Right lobe of liver (tissue), 6 donors: ENCODE measurements at regions of chr1 and their contacts with region 1.

Region 1: GRCh38 chr1:110460253-110461220 is 9.6 kb downstream of the PROK1 start:
- DNase-seq: peak in 2 of 3 donors; percentile 43 to 71
- ATAC-seq: peak; percentile 93 to 99 (median 98)
- H3K4me3 ChIP-seq: no peak overlapping the region
- H3K27ac ChIP-seq: no peak overlapping the region
- H3K4me1 ChIP-seq: no peaks in the 10 kb centered on the region
- H3K27me3 ChIP-seq: no peaks in the 10 kb centered on the region
- CTCF ChIP-seq: peak; percentile 96 to 99 (median 98)
- POLR2A ChIP-seq: no peak

Region 2: GRCh38 chr1:110203021-110203661 is 257.4 kb before region 1 on chr1:
- intact Hi-C with region 1: loop called (anchors 5 to 10 kb)
- DNase-seq: no peak
- ATAC-seq: peak; percentile 46 to 76 (median 74)
- H3K4me3 ChIP-seq: no peak overlapping the region
- H3K27ac ChIP-seq: no peak overlapping the region
- H3K4me1 ChIP-seq: no peaks in the 10 kb centered on the region
- H3K27me3 ChIP-seq: no peaks in the 10 kb centered on the region
- CTCF ChIP-seq: peak; percentile 78 to 85 (median 83)
- POLR2A ChIP-seq: no peak

Region 3: GRCh38 chr1:110209715-110210603 is 250.6 kb before region 1 on chr1 and contains the start of gene KCNC4:
- intact Hi-C with region 1: loop called in 1 of 2 experiments (anchors 10 kb)
- DNase-seq: peak; percentile 77 to 88 (median 87)
- ATAC-seq: peak; percentile 76 to 81 (median 79)
- H3K4me3 ChIP-seq: peak within 1 kb of the TSS; percentile 49 to 69 (median 58)
- H3K27ac ChIP-seq: peak within 1 kb of the TSS; percentile 47 to 63 (median 49)
- H3K4me1 ChIP-seq: peaks cover 0 to 21% (median 0%) of the 10 kb centered on the region in 4 donors
- H3K27me3 ChIP-seq: peaks cover 0 to 5% of the 10 kb centered on the region in 2 donors
- CTCF ChIP-seq: no peak
- POLR2A ChIP-seq: no peak
- total RNA-seq, gene KCNC4: 0.37 to 4.4 (median 1.7) TPM

Region 4: GRCh38 chr1:110312188-110313121 is 148.1 kb before region 1 on chr1:
- intact Hi-C with region 1: loop called in 1 of 2 experiments (anchors 5 kb)
- DNase-seq: peak; percentile 81 to 84 (median 84)
- ATAC-seq: peak; percentile 98 to 100 (median 99)
- H3K4me3 ChIP-seq: no peak overlapping the region
- H3K27ac ChIP-seq: no peak overlapping the region
- H3K4me1 ChIP-seq: peaks cover 0 to 6% (median 0%) of the 10 kb centered on the region in 4 donors
- H3K27me3 ChIP-seq: no peaks in the 10 kb centered on the region
- CTCF ChIP-seq: peak; percentile 94 to 97 (median 95)
- POLR2A ChIP-seq: no peak

Region 5: GRCh38 chr1:110418729-110419128 is 41.8 kb before region 1 on chr1:
- intact Hi-C with region 1: loop called in 1 of 2 experiments (anchors 5 kb)
- DNase-seq: no peak
- ATAC-seq: no peak
- H3K4me3 ChIP-seq: no peak overlapping the region
- H3K27ac ChIP-seq: no peak overlapping the region
- H3K4me1 ChIP-seq: peaks cover 0 to 9% (median 0%) of the 10 kb centered on the region in 4 donors
- H3K27me3 ChIP-seq: no peaks in the 10 kb centered on the region
- CTCF ChIP-seq: no peak
- POLR2A ChIP-seq: no peak

Region 6: GRCh38 chr1:110746579-110747160 is 286.1 kb after region 1 on chr1:
- intact Hi-C with region 1: no loop called
- DNase-seq: peak in 1 of 3 donors; percentile 28
- ATAC-seq: peak; percentile 37 to 66 (median 47)
- H3K4me3 ChIP-seq: no peak overlapping the region
- H3K27ac ChIP-seq: no peak overlapping the region
- H3K4me1 ChIP-seq: no peaks in the 10 kb centered on the region
- H3K27me3 ChIP-seq: no peaks in the 10 kb centered on the region
- CTCF ChIP-seq: no peak
- POLR2A ChIP-seq: no peak